ENCODE measurements at regions of chr21 and their contacts with region 1.

Region 1: GRCh38 chr21:25607151-25608043 is at the start of gene MRPL39:
- DNase-seq: peak; percentile 78 to 94
- H3K4me3 ChIP-seq: peak within 1 kb of the TSS; percentile 69 to 97 (median 89)
- H3K27ac ChIP-seq: peak within 1 kb of the TSS; percentile 86
- H3K4me1 ChIP-seq: peaks cover 0 to 8% (median 0%) of the 10 kb centered on the region in 4 experiments; a peak in 1 of 7 replicates
- H3K27me3 ChIP-seq: no peaks in the 10 kb centered on the region
- CTCF ChIP-seq: peak; percentile 69 to 79 (median 76)
- EP300 ChIP-seq: no peak
- POLR2A ChIP-seq: peak; percentile 82 to 96
- RAD21 ChIP-seq: peak; percentile 56 to 58
- total RNA-seq, gene MRPL39: 43.2 and 45.0 TPM in 2 replicates

Region 2: GRCh38 chr21:25626757-25627156 is 19.4 kb after region 1 on chr21:
- CTCF ChIA-PET with region 1: interaction called, 12 read pairs
- POLR2A ChIA-PET with region 1: no interaction called
- DNase-seq: no peak
- H3K4me3 ChIP-seq: no peak overlapping the region
- H3K27ac ChIP-seq: no peak overlapping the region
- H3K4me1 ChIP-seq: no peaks in the 10 kb centered on the region
- H3K27me3 ChIP-seq: no peaks in the 10 kb centered on the region
- CTCF ChIP-seq: no peak
- EP300 ChIP-seq: no peak
- POLR2A ChIP-seq: no peak
- RAD21 ChIP-seq: no peak

Region 3: DNA sequence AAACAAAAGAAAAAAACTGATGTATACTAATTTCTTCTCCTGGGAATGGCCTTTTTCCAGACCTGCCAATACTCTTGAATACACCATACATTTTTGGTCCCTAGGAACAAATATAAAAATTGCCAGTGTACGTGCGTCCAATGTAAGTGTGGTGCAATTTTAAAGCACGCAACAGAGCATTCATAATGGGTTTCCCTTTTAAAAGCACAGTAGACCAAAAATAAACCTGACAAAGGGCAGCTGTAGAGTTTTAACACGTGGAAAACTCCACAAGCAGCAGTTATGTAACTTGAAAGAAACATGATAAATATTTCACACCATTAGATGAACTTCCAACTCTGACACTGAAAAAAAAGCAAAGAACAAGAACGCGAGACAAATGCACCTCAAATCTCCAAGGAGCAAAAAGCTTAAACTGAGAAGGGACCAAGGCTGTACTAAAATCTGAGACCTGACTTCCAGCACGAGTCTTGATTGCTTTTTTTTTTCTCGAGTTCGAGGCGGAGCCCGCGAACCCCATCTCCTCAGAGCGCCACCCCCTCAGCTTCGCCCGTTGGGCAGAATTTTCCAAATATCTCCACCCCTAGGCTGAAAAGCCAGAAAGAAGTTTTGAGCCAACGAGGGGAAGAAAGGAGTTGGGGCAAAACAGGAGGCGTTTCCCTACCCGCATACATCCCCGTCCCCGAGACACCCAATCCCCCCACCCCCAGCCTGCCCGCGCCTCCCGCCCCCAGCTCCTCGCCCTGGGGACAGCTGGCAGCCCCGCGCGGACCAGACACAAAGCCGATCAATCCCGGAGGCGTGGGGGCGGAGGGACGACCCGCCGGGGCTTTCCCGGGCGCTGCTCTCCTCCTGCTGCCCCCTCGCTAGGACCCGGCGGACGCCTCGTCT is 31.5 kb after region 1 on chr21 and contains the start of gene JAM2:
- CTCF ChIA-PET with region 1: interaction called, 10 read pairs
- POLR2A ChIA-PET with region 1: no interaction called
- DNase-seq: no peak
- H3K4me3 ChIP-seq: peak within 1 kb of the TSS; percentile 50 to 84 (median 76)
- H3K27ac ChIP-seq: no peak within 1 kb of the TSS
- H3K4me1 ChIP-seq: peaks cover 0 to 3% (median under 1%) of the 10 kb centered on the region in 4 experiments; a peak in 3 of 7 replicates
- H3K27me3 ChIP-seq: peaks cover 0 to 5% (median 2%) of the 10 kb centered on the region in 4 experiments; a peak in 3 of 7 replicates
- CTCF ChIP-seq: no peak
- EP300 ChIP-seq: no peak
- POLR2A ChIP-seq: peak in 1 of 2 experiments; percentile 30; a peak in 1 of 3 replicates
- RAD21 ChIP-seq: no peak
- total RNA-seq, gene JAM2: 7.0 and 9.5 TPM in 2 replicates

Region 4: DNA sequence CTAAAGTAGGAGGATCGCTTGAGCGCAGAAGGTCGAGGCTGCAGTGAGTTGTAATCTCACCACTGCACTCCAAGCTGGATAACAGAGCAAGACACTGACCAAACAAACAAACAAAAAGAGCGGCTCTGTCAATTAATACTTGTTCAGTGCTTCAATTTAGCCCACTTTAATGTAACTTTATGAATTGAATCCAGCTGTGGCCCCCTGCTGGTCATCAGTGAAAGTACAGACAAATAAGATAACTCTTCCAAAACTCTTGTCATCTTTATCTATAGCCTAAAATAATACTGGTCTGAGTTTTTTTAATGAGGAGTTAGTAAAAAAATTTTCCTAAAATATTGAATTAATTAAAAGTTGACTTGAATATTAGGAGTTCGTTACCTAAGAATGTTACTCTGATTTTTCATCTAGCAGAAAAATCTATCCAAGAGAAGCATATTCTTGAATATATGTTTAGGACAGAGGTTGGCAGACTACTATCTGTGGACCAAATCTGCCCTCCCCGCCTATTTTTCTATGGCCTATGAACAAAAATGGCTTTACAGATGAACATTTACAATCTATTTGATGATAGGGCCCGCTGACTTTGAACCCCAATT is 101.2 kb after region 1 on chr21:
- CTCF ChIA-PET with region 1: interaction called, 29 read pairs
- POLR2A ChIA-PET with region 1: no interaction called
- DNase-seq: no peak
- H3K4me3 ChIP-seq: no peak overlapping the region
- H3K27ac ChIP-seq: no peak overlapping the region
- H3K4me1 ChIP-seq: no peaks in the 10 kb centered on the region
- H3K27me3 ChIP-seq: no peaks in the 10 kb centered on the region
- CTCF ChIP-seq: peak in 2 of 3 experiments; percentile 40 to 62; a peak in 2 of 4 replicates
- EP300 ChIP-seq: no peak
- POLR2A ChIP-seq: no peak
- RAD21 ChIP-seq: peak; percentile 37 to 56; a peak in 3 of 4 replicates

Region 5: GRCh38 chr21:25734904-25735645 is 127.7 kb after region 1 on chr21 and contains the starts of genes ATP5PF and GABPA:
- CTCF ChIA-PET with region 1: interaction called, 10 read pairs
- POLR2A ChIA-PET with region 1: interaction called, 31 read pairs
- DNase-seq: peak; percentile 93 to 97
- H3K4me3 ChIP-seq: peak within 1 kb of the TSS; percentile 64 to 97 (median 90)
- H3K27ac ChIP-seq: peak within 1 kb of the TSS; percentile 100
- H3K4me1 ChIP-seq: peaks cover 0 to 8% (median 0%) of the 10 kb centered on the region in 4 experiments; a peak in 2 of 7 replicates
- H3K27me3 ChIP-seq: no peaks in the 10 kb centered on the region
- CTCF ChIP-seq: no peak
- EP300 ChIP-seq: peak in 1 of 2 experiments; percentile 31; a peak in 1 of 3 replicates
- POLR2A ChIP-seq: peak in 1 of 2 experiments; percentile 78; a peak in 2 of 3 replicates
- RAD21 ChIP-seq: no peak
- total RNA-seq, gene ATP5PF: 131 and 135 TPM in 2 replicates
- total RNA-seq, gene GABPA: 22.2 and 22.8 TPM in 2 replicates

Region 6: DNA sequence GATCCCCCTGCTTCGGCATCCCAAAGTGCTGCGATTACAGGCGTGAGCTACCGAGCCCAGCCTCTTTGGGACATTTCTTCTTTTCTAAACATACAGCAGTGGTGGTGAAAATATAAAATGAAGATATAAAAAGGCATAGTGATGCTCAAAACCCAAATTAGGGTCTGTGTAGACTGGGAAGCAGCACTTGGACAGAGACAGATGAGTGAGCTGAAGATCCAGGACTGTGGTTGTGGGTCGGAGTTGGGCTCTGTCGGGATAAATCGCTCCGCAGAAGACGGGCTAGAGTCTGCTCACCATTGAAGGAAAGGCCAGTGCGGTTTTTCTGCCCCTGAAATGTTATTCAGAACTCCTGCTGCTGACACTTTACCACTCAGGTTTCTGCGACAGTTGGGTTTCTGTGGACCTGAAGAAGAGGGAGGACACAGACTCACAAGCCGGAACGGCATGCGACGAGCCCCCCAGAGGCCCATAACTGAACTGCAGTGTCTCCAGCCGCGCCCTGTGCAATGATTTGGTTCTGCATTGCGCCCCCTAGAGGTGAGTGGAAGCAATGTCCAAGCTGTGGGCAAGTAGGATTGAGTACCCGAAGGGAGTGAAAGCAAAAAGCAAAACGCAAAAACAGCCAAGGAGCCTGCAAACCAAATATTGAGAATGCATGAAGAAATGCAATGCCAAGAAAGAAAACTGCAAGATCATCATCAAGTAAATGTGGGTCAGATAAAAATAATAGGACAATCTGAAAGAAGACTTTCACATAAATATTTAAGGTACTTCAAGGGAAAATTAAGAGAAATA is 194.0 kb after region 1 on chr21:
- CTCF ChIA-PET with region 1: interaction called, 10 read pairs
- POLR2A ChIA-PET with region 1: no interaction called
- DNase-seq: peak; percentile 83 to 97
- H3K4me3 ChIP-seq: peak overlapping the region in 1 of 4 experiments; percentile 19; a peak in 1 of 8 replicates
- H3K27ac ChIP-seq: no peak overlapping the region
- H3K4me1 ChIP-seq: peaks cover 0 to 2% (median under 1%) of the 10 kb centered on the region in 4 experiments; a peak in 1 of 7 replicates
- H3K27me3 ChIP-seq: no peaks in the 10 kb centered on the region
- CTCF ChIP-seq: peak; percentile 99 to 100 (median 99)
- EP300 ChIP-seq: no peak
- POLR2A ChIP-seq: no peak
- RAD21 ChIP-seq: peak; percentile 73

Measured in H1 (cell line).